GM13976 (cell line): ENCODE measurements at regions of chr13 and their contacts with region 1.

Region 1: DNA sequence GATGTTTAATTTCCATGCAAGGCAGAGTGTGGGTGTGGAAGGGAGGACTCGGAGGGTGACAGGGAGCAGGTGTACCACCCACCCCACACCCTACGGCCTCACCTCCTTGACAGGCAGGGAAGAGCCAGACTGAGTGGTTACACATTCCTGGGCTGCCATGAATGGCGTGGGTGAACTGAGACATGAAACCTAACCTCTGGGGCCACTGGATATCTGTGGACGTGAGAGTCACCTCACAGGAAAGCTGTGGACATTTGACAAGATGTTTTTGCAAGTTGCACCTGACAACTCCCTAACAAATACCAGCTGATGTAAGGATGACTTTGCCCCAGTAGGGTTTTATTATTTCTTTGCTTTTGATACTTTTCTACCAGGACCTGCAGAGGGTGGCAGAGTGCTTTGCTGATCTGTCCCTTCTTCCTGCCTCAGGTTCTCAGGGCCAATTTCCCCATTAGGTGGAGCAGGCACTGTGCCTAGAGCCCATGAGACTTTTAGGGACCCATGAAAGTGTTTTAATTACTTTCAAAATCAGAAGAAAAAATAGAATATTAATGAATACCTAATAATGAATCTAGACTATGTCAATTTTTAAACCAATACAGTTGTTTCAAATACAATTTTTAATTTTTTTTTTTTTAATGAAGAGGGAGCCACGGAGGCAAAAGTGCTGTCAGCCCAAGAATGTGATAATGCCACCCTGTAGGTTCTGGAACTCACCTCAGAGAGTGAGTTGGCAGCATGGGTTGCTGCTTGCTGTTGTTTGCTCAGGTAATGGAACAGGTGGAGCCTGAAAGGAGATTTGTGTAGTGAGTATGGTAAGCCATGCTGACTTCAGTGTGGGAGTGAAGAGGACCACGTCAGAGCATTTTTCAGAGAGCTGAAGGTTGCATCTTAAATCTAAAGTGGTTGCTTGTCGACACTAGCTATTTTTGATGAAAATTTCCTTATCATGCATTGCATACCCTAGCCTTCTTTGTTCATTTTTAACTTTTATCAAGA is 58.0 kb upstream of the CYSLTR2 start:
- DNase-seq: peak; percentile 31
- CTCF ChIP-seq: peak; percentile 43

Region 2: DNA sequence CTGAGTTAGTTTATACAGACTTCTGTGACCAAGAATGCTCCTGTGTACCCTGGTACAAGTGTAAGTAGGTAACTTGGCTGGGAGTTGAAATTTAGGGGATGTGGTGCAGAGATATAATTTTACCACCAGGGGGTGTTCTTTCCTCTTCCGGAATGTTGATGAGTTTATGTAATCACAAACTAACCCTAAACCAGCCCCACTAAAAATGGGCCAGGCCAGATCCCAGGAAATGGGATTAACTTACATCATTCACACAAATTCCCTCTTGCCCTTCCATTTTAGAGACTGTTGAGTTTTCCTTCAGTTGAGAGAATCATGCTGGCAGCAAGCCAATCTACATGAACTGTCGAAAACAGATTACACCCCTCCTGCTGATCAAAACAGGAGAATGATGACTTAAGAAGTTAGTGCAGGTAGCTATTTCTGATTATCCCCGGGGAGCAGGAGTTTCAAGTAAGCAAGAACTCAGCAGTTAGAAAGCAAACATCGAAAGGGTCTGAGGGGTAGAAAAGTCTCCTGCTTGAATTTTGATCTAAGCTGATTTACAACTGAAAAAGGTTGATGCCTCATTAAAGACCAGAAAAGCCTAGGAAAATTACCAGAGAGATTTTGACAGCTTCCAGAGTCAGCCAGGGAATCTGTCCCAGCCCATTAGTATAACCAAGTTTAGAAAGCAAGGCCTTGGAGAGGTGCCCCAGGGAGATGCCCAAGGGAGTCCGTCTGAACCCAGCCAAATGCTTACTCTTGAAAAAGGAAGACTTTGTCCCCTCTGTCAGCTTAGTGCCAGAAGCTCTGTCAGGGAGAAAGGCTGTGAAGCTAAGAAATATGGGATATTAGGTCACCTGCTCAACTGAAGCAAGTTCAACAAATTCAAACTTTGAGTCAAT is 468.5 kb before region 1 on chr13:
- in situ Hi-C with region 1: loop called (anchors 25 kb)
- DNase-seq: peak; percentile 59
- CTCF ChIP-seq: peak; percentile 44

Region 3: GRCh38 chr13:48775804-48776203 is 180.1 kb after region 1 on chr13:
- in situ Hi-C with region 1: loop called (anchors 5 kb)
- DNase-seq: no peak
- CTCF ChIP-seq: no peak

Region 4: GRCh38 chr13:49046002-49046401 is 450.3 kb after region 1 on chr13:
- in situ Hi-C with region 1: no loop called
- DNase-seq: no peak
- CTCF ChIP-seq: no peak